Gastrocnemius medialis (tissue), 4 donors: ENCODE measurements at regions of chr6 and their contacts with region 1.

Region 1: DNA sequence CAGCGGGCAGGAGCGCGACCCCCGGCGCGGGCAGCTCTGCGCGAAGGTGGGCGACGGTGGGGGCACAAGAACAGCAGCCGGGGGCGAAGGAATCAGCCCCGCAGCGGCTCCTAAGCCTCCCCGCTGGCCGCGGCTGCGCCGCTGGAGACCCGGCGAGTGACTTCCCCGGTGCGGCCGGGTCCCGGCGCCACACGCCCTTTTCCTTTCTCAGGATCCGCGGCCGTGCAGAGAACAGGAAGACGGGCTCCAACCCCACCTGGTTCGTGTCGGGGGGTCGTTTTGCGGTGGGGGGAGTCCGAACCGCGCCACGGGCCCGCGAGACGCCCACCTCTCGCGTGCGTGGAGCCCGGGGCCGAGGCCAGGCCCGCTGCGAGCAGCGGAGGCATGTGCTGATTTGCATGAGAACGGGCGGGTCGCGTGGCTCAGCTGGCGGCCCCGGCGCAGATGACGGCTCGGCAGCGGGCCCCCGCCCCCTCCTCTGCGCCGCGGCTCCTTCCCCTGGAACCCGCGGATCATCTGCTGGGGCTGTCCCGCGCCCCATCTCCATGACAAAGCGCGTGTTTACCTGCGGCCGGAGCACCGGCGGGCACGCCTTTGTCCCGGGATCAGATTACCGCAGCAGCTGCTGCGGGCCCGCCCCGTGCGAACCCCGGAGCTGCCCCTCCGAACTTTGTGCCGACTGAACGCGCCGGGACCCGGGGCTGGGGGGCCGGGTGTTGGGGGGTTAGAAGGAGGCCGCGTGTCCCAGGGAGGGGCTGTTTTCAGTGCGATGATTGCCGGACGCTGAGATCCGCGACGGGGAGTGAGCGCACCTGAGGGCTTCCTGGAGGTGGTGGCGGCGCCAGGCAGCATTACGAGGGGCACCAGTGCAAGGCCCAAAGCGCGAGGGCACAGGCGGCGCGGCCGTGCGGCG is 4.9 kb upstream of the DLL1 start:
- DNase-seq: no peak
- ATAC-seq: peak; percentile 17 to 26
- H3K4me3 ChIP-seq: peak overlapping the region; percentile 51 to 77 (median 62)
- H3K27ac ChIP-seq: no peak overlapping the region
- H3K4me1 ChIP-seq: peaks cover 16 to 30% of the 10 kb centered on the region in 2 donors
- H3K27me3 ChIP-seq: peaks cover 60 to 66% (median 64%) of the 10 kb centered on the region in 3 donors
- CTCF ChIP-seq: no peak
- POLR2A ChIP-seq: peak in 1 of 2 donors; percentile 20

Region 2: GRCh38 chr6:169831450-169832246 is 464.1 kb before region 1 on chr6:
- in situ Hi-C with region 1: loop called in 3 of 4 experiments (anchors 10 to 25 kb)
- intact Hi-C with region 1: loop called (anchors 1 kb)
- DNase-seq: peak; percentile 48 to 49
- ATAC-seq: peak; percentile 84 to 91
- H3K4me3 ChIP-seq: no peak overlapping the region
- H3K27ac ChIP-seq: no peak overlapping the region
- H3K4me1 ChIP-seq: no peaks in the 10 kb centered on the region
- H3K27me3 ChIP-seq: peaks cover 0 to 2% (median 0%) of the 10 kb centered on the region in 3 donors
- CTCF ChIP-seq: peak; percentile 85 to 94 (median 92)
- POLR2A ChIP-seq: no peak

Region 3: DNA sequence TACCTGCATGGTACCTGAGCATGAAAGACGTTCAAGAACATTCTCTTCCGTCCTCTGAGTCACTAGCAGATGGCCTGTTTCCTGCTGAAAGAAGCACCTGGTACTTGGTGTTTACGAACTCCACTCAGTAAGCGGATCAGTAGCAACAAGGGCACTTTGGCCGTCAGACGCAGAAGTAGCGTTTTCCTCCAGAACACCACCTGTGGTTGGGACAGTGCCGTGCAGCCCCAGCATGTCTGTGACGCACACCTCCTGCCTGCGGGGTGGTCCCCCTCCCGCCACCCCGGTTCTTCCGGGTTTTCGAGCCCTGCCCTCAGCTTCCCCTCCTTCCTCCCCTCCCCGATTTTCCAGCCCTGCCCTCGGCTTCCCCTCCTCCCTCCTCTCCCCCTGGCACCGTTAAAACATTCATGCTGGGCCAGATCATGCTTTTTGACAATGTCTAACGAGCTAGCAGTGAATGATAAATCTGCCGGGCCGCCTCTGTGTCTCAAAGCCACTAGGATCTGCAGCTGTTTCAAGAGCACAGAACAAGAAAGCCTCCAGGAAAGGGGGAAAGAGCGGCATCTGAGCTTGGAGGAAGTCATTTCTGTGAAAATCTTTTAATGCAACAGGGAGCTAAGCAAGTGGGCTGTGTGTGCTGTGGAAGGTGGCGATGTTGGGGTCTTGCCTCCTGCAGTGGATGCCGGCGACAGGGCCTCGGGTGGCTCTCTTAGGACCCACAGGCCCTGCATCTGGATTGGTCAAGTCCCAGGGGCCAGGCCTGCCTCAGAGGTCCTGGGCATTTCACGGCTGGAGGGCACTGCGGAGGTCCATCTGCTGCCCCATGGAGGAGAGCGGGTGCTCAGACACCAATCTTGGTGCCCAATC is 336.4 kb before region 1 on chr6:
- in situ Hi-C with region 1: no loop called
- intact Hi-C with region 1: loop called (anchors 5 kb)
- DNase-seq: peak in 1 of 2 donors; percentile 10
- ATAC-seq: no peak
- H3K4me3 ChIP-seq: no peak overlapping the region
- H3K27ac ChIP-seq: no peak overlapping the region
- H3K4me1 ChIP-seq: peaks cover 0 to 3% of the 10 kb centered on the region in 2 donors
- H3K27me3 ChIP-seq: peaks cover 4 to 12% (median 11%) of the 10 kb centered on the region in 3 donors
- CTCF ChIP-seq: peak in 1 of 5 experiments; percentile 13
- POLR2A ChIP-seq: no peak